PC-3 (cell line): ENCODE measurements at regions of chr16 and their contacts with region 1.

Region 1: DNA sequence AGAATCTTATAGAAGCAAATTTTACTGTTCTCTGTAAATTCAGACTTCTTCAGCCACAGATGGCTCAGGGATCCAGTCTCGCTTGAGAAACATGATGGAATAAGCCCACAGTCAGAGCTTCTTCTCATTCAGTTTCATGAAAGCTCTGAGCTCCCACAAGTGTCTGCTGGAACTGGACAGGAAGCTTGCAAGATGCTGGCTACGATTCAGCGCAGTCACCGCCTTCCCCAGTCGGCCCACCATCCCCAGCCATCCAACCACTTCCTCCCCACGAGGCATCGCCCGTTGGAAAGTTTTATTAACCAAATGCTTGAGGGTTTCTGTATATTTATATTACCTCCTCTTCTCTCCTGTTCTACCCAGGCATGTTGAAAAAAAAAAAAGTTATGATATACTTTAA is 171.7 kb downstream of the ZFHX3 start:
- DNase-seq: no peak
- ATAC-seq: no peak
- H3K4me3 ChIP-seq: no peak overlapping the region
- H3K27ac ChIP-seq: no peak overlapping the region
- H3K4me1 ChIP-seq: peaks cover 28% of the 10 kb centered on the region
- H3K27me3 ChIP-seq: no peaks in the 10 kb centered on the region
- CTCF ChIP-seq: no peak

Region 2: DNA sequence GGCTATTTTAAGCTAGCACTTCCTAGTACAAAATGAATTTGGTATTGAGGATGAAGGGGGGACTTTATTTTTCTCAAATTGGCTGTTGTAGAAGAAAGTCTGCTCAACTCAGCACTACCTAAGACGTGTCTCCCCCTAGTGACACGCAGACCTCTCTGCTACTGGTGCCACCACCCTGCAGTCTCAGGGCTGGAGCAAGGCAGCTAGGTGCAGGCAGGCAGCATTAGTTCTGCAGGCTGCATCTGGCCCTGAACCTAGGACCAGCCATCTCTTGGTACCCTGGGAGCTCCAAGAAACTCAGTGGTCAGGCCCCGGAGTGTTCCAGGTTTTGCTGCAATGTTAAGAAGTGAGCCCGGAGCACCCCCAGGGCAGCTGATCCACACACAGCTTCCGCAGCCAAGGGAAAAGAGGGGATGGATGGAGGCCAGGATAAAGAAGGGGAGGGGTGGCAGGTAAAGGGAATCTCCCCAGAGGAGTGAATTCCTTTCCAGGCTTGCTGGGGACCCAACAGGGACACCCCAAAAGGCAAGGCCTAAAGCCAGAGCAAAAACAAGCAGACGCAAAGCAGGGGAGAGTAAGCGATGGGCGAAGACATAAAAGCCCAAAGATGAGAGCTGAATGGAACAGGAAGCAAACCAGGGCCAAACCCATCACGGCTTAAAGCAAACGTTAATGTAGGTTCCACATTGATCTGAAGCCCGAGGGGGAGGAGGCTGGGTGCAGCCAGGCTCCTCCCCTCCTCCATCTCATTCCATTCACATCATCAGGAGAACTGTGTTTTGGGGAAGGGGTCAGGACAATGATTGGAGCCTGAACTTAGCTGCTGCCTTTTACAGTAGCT is 28.8 kb before region 1 on chr16:
- CTCF ChIA-PET with region 1: no interaction called
- POLR2A ChIA-PET with region 1: no interaction called
- intact Hi-C with region 1: loop called (anchors 2 kb)
- DNase-seq: peak; percentile 19
- ATAC-seq: peak; percentile 63
- H3K4me3 ChIP-seq: no peak overlapping the region
- H3K27ac ChIP-seq: 0 out of 2 replicates have a peak overlapping the region, but pooled peaks have one; percentile 79
- H3K4me1 ChIP-seq: peaks cover 15% of the 10 kb centered on the region
- H3K27me3 ChIP-seq: no peaks in the 10 kb centered on the region
- CTCF ChIP-seq: peak; percentile 55

Region 3: DNA sequence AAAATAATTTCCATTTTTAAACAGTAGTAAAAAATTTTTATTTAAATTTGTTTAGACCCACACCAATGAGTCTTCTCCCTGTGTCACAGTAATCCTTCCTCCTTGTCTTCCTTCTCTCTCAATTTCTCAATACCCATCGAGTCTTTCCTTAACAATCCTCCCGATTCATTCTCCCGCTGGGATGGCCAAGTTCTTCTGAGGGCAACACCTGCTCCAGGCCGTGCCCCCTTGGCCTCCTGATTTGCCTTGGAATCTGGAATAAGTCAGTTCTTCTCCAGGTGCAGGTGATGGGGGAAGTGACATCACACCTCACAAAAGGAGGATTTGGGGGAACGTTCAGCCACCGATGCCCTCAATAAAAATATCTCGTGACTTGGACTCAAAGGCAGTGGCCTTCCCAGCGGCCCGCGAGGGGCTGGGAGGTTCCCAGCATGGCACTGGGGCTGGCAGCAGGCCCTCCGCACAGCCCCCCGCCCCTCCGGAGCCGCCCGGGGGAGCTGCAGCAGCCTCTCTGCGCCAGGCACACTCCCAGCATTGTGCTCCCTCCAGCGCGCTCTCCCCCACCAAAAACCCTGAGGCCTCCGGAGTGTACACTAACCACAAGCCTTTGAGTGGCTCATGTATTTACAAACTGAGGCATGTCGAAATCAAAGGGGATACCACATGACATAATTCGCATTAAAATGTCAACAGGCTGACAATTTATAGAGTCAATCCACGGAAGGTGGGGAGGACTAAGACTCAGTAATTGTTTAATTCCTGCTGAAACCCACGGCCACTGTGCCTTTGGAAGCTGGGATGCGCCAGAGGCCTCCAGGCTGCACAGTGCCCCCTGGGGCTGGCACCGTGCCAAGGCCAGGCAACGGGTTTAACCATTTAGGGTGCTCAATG is 51.2 kb after region 1 on chr16:
- CTCF ChIA-PET with region 1: no interaction called
- POLR2A ChIA-PET with region 1: no interaction called
- intact Hi-C with region 1: loop called (anchors 5 kb)
- DNase-seq: peak; percentile 96
- ATAC-seq: peak; percentile 94
- H3K4me3 ChIP-seq: peak overlapping the region; percentile 62
- H3K27ac ChIP-seq: peak overlapping the region; percentile 92
- H3K4me1 ChIP-seq: peaks cover 44% of the 10 kb centered on the region
- H3K27me3 ChIP-seq: no peaks in the 10 kb centered on the region
- CTCF ChIP-seq: no peak